Left cardiac atrium (tissue), 4 donors: ENCODE measurements at regions of chr1 and their contacts with region 1.

Region 1: DNA sequence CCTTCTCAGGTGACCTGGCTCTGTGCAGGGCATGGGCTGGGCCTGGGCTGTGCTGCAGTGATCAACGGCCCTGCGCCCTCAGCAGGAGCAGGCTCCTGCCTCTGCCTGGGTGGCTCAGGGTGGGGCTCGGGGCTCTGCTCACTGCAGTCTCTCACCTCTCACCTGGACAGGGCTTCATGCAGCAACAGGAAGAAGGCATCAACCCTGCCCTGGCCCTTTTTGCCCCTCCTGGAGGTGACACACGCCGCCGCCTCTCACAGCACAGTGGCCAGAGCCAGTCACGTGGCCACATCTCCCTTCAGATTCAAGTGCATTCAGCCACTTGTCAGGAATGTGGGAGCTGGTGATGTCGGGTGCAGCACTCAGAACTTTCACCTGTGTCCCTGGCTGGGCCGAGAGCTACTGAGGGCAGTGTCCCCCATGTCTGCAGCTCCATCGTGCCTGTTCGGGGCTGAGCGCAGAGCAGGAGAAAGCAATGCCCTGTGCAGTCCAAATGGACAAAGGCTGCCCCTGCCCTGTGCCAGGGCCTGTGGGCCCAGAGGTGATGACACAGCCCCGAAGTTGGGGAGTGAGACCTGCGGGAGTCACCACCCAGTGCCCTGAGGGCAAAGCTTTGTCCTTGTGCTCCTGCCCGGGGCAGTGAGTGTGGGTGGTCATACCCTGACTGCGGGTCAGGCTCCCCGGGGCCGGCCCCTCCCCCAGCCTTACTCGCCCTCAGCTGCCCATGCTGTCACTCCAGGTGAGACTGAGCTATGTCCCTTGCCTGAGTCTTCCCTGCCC is 314.0 kb downstream of the PTPRU start:
- DNase-seq: no peak
- ATAC-seq: no peak

Region 2: DNA sequence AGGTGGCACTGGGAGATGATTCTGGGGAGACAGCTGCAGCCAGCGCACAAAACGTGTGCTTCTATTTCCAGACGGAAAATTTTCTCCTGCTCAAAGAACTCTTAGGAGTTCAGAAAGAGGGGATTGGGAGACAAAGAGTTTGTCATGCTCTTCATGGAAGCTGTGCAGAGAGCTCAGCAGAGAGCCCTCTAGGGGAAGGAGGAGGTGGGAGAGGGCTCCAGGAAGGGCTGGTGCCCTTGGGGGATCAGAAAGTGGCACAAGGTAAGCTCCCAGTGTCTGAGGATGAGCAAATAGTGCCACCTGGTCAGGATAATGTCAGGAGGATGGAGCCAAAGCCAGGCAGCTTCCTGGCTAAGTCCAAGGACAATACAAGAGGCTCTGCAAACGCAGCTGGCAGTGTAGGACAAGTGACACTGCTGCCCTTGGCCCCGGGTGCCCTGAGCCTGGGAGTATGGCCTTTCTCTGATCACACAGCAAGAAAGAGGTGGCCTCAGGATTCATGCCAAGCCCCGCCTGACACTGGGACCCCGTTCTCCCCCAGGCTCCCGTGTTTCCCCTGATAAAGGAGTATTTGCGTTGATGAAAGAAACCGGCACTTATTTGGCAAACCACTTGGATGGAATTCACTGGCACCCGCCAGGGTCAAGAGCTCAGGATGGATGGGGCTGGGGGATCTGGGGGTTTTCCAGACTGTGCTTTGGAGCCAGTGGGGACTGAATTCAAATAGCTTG is 59.9 kb before region 1 on chr1:
- intact Hi-C with region 1: no loop called
- DNase-seq: no peak
- ATAC-seq: no peak

Region 3: GRCh38 chr1:30652152-30652841 is 1102.0 kb after region 1 on chr1:
- intact Hi-C with region 1: loop called in 1 of 2 experiments (anchors 10 kb)
- DNase-seq: no peak
- ATAC-seq: no peak